GM12878 (cell line): ENCODE measurements at regions of chr2 and their contacts with region 1.

Region 1: DNA sequence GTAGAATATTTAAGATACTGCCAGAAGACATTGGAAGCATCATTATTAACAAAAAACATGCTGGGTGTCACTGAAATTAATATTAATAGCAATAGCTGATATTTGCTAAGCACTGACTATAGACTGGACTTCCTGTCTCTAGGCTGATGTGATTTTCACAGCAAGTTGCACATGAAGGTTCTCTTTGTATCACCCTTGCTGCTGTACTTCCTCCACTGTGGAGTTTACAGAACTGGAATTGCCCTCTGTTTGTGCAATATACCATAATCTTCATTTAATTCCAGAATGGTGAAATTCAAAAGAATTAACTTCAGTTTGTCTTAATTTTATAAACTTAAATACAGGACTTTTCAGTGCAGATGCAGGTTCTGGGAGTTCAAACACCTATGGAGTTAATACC is 585.1 kb downstream of the RNF144A start:
- DNase-seq: no peak
- ATAC-seq: peak; percentile 52; the same call in 1 of the 3 replicates
- H3K4me3 ChIP-seq: no peak overlapping the region
- H3K27ac ChIP-seq: no peak overlapping the region
- H3K4me1 ChIP-seq: no peaks in the 10 kb centered on the region
- H3K27me3 ChIP-seq: no peaks in the 10 kb centered on the region
- CTCF ChIP-seq: no peak
- EP300 ChIP-seq: no peak
- POLR2A ChIP-seq: no peak
- RAD21 ChIP-seq: no peak

Region 2: DNA sequence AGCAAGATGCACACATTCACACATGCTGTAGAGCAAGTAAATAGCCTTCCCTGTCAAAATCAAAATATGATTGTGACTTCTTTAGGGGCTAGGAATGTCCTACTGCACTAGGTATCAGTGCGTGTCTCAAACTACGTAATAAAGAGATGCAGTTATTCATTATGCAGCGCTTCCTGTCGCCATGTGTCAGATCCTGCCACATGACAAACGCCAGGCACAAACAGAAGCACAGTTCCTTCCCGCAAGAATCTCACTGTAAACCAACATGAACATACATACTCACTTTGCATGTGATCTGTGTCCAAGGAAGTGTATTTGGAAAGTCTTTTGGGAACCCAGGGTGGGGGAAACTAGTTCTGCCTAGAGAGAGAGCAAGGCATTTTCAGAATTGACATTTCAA is 14.8 kb after region 1 on chr2:
- CTCF ChIA-PET with region 1: interaction called, 8 read pairs
- POLR2A ChIA-PET with region 1: interaction called, 7 read pairs
- RAD21 ChIA-PET with region 1: interaction called, 3 read pairs
- SMC1A ChIA-PET with region 1: interaction called, 43 read pairs
- in situ Hi-C with region 1: no loop called
- intact Hi-C with region 1: no loop called
- DNase-seq: no peak
- ATAC-seq: peak; percentile 68
- H3K4me3 ChIP-seq: no peak overlapping the region
- H3K27ac ChIP-seq: no peak overlapping the region
- H3K4me1 ChIP-seq: peaks cover 17% of the 10 kb centered on the region
- H3K27me3 ChIP-seq: peaks cover 0 to 2% of the 10 kb centered on the region in 2 experiments; a peak in 1 of 4 replicates
- CTCF ChIP-seq: no peak
- EP300 ChIP-seq: no peak; a peak in 2 of 4 replicates
- POLR2A ChIP-seq: no peak
- RAD21 ChIP-seq: no peak

Region 3: DNA sequence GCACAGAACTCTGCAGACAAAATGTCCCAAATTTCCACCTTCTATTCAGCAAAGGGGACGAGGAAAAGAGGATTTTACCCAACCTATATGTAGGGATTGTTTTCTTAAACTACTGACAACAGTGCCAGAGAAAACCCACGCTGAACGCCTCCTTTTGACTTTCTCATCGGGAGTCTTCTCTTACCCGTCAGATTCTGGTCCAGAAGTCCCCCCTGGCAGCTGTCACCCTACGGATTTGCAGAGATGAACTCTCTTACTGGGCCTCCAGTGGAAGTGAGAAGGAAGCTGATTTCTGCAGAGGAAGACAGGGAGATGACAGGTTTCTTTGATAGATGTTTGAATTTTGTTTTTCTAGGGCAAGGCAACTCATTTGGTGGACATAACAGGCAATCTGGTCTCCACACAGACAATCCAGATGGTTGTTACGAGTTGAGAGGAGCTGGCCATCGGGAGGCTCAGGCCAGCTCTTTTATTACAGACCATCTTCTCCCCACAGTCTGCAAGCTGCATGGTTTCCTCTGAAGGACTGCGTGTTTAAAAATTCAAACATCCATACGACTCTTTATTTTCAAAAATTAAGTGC is 219.2 kb after region 1 on chr2:
- CTCF ChIA-PET with region 1: no interaction called
- POLR2A ChIA-PET with region 1: no interaction called
- RAD21 ChIA-PET with region 1: no interaction called
- SMC1A ChIA-PET with region 1: no interaction called
- in situ Hi-C with region 1: no loop called
- intact Hi-C with region 1: no loop called
- DNase-seq: no peak
- ATAC-seq: no peak
- H3K4me3 ChIP-seq: no peak overlapping the region
- H3K27ac ChIP-seq: no peak overlapping the region
- H3K4me1 ChIP-seq: peaks cover 4% of the 10 kb centered on the region; the same call in 1 of the 2 replicates
- H3K27me3 ChIP-seq: no peaks in the 10 kb centered on the region
- CTCF ChIP-seq: no peak
- EP300 ChIP-seq: no peak
- POLR2A ChIP-seq: no peak
- RAD21 ChIP-seq: no peak